Left ventricle myocardium superior (tissue), 1 donor: ENCODE measurements at regions of chr11 and their contacts with region 1.

Region 1: GRCh38 chr11:102495161-102496042 is 35.1 kb downstream of the MMP7 start:
- DNase-seq: no peak
- ATAC-seq: peak; percentile 79

Region 2: DNA sequence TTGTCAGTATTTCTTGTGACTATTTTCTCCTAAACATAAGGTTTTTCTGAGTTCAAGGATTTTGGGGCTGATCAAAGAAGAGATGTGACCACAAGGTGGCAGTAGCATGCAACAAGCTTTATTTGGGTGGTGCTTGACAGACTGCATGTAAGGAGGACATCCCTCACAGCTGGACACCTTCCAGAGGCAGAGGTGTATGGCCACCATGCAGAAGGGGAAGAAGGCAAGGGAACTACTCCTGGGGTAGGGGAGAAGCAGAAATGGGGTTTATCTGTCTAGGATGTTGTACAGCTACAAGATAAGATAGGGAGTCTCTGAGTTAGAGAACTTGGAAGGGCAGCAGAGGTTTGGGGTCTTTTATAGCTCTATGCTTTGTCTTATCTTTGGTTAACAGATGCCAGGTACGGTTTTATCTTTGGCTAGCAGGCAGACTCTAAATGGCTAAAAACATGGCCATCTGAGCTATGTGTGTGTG is 153.5 kb before region 1 on chr11:
- intact Hi-C with region 1: loop called (anchors 2 kb)
- DNase-seq: peak; percentile 52
- ATAC-seq: peak; percentile 72